ENCODE measurements at regions of chr17 and their contacts with region 1.

Region 1: GRCh38 chr17:82536512-82537201 is 17.1 kb downstream of the FOXK2 start:
- DNase-seq: no peak
- H3K4me3 Mint-ChIP-seq: no peak overlapping the region
- H3K27ac Mint-ChIP-seq: peak overlapping the region; percentile 79
- H3K4me1 Mint-ChIP-seq: peaks cover 50% of the 10 kb centered on the region
- H3K27me3 Mint-ChIP-seq: no peaks in the 10 kb centered on the region

Region 2: DNA sequence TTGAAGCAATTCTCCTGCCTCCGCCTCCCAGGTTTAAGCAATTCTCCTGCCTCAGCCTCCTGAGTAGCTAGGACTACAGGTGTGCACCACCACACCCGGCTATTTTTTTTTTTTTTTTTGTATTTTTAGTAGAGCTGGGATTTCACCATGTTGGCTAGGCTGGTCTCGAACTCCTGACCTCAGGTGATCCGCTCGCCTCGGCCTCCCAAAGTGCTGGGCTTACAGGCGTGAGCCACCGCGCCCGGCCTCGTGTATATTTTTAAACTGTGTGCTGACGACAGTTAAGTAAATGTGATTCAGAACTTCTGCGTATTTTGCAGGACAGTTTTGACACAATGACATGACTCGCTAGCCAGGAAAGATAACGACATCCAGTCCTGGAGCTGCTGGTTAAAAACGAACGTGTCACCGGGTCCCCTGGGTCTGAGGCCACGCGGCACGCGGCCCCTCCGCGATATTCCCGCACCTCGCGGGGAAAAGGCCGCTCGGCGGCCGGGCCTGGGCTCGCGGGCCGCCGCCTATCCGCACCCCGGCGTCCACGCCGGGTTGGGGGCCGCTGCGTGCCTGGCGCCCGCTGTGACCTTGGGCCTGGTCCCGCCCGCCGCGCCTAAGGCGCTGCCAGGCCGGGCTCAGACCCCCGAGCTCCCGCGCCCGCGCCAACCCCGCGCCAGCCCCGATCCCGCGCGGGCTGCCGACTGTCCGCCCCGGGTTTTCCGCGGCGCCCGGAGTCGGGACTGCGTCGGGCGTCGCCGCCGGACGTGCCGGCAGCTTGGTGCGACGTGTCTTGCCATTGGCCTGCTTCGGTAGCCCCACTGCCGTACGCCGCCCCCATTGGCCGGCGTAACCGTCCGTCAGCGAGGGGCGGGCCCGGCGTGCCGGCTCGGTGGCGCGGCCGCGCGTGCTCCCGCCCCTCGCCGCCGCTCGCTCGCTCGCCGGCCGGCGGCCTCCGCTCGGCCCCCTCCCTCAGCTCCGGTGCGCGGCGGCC is 17.5 kb before region 1 on chr17 and contains the start of gene FOXK2:
- CTCF ChIA-PET with region 1: interaction called, 12 read pairs
- POLR2A ChIA-PET with region 1: no interaction called
- DNase-seq: peak; percentile 92
- H3K4me3 Mint-ChIP-seq: peak within 1 kb of the TSS; percentile 79
- H3K27ac Mint-ChIP-seq: peak within 1 kb of the TSS; percentile 91
- H3K4me1 Mint-ChIP-seq: peaks cover 21% of the 10 kb centered on the region
- H3K27me3 Mint-ChIP-seq: peaks cover 4% of the 10 kb centered on the region
- total RNA-seq, gene FOXK2: 59.6 to 63.2 TPM

Region 3: DNA sequence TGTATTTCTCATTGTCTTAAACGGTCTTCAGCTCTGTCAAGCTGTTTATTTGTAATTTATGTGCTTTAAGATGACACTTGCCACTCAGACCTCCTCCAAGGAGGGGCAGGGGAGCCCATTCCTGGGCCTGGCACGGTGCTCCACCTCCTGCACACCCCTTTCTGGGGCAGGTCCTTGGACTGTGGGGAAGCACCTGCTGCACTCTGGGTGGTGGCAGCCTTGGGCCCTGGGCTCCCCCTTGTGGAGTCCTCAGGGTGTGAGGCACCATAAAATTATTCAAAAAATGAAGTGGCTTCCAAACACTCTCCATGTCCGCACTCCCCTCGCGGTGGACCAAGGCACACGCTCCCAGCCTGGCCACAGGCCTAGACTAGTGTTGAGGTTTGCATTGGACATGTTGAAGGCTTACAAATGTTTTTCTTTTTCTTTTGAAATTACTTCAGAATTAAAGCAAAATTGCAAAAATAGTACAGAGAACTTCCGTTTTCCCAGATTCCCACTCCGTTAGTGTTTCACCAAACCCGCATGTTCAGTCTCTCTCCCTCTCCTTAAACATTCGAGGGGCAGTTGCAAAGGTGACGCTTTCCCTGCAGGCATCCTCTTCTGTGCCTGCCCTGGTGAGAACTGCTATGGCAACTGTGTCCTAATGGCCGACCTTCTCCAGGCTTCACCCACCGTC is 15.3 kb after region 1 on chr17:
- CTCF ChIA-PET with region 1: interaction called, 11 read pairs
- POLR2A ChIA-PET with region 1: no interaction called
- DNase-seq: peak; percentile 86
- H3K4me3 Mint-ChIP-seq: no peak overlapping the region
- H3K27ac Mint-ChIP-seq: peak overlapping the region; percentile 41
- H3K4me1 Mint-ChIP-seq: peaks cover 34% of the 10 kb centered on the region
- H3K27me3 Mint-ChIP-seq: no peaks in the 10 kb centered on the region

Region 4: DNA sequence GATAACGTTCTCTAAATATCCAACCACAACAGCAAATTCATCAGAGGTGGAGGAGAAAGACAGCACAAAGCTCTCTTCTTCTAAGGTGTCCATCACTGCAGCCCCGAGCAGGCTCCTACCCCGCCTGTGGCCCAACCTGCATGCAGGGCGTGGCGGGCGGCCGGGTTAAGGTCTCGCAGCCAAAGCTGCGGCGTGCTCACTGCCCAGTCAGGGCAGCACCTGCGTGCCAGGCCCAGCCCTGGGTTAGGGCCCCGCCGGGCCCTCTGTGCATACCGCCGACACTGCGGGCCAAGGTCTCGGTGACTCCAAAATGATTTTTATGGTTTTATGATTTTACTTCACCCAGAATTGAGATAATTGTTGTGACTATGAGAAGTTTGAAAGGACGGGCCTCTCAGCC is 40.6 kb after region 1 on chr17:
- CTCF ChIA-PET with region 1: no interaction called
- POLR2A ChIA-PET with region 1: no interaction called
- DNase-seq: no peak
- H3K4me3 Mint-ChIP-seq: no peak overlapping the region
- H3K27ac Mint-ChIP-seq: no peak overlapping the region
- H3K4me1 Mint-ChIP-seq: peaks cover 1% of the 10 kb centered on the region
- H3K27me3 Mint-ChIP-seq: no peaks in the 10 kb centered on the region

Region 5: DNA sequence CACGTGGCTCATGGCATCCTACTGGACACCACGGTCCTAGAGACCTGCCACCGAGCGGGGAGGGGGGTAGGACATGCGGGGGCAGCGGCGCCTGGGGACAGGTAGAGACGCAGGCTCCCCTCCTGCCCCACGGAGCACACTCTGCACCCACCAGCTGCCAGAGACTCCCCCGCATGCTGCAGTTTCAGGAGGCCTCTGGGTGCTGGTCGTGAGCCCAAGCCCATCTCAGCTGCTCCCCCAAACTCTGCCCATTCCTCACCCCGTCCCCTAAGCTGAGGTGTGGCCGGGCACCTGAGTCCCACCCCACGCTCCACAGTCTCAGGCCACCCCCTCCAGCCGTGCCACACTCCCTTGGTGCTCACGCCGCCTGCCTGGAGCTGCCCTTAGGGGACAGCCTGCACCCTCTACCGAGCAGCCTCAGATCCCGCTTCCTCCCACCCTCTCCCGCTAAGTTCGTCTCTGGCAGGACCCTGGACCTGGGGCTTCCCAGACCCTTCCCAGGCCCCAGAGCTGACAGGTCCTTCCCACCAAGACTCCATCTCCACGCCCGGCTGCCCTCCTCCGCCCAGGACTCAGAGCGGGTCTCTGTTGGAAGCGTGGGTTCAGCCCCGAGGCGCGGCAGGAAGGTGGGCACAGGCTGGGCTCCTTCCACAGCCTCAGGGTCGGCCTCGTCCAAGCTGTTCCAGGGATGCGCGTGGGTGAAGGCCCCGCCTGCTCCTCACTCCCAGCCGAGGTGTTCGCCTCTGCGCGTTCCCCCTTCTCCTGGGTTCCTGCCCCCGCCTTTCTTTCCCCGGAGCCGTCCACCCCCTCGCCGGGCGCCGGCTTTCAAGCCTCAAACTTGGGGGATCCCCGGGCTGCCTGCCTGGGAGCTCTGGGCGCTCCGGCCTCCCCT is 160.5 kb after region 1 on chr17:
- CTCF ChIA-PET with region 1: no interaction called
- POLR2A ChIA-PET with region 1: no interaction called
- DNase-seq: no peak
- H3K4me3 Mint-ChIP-seq: peak overlapping the region; percentile 49
- H3K27ac Mint-ChIP-seq: no peak overlapping the region
- H3K4me1 Mint-ChIP-seq: peaks cover 5% of the 10 kb centered on the region
- H3K27me3 Mint-ChIP-seq: peaks cover 12% of the 10 kb centered on the region

Measured in activated CD4-positive, alpha-beta T cell treated with anti-CD3 and anti-CD28 coated beads, Interleukin-2, amount 10 ng/mL, durations not matched to agents 7 days and 5 days (primary cell).